Activated CD4-positive, alpha-beta memory T cell treated with anti-CD3 and anti-CD28 coated beads for 36 hours (primary cell): ENCODE measurements at regions of chr1 and their contacts with region 1.

Region 1: DNA sequence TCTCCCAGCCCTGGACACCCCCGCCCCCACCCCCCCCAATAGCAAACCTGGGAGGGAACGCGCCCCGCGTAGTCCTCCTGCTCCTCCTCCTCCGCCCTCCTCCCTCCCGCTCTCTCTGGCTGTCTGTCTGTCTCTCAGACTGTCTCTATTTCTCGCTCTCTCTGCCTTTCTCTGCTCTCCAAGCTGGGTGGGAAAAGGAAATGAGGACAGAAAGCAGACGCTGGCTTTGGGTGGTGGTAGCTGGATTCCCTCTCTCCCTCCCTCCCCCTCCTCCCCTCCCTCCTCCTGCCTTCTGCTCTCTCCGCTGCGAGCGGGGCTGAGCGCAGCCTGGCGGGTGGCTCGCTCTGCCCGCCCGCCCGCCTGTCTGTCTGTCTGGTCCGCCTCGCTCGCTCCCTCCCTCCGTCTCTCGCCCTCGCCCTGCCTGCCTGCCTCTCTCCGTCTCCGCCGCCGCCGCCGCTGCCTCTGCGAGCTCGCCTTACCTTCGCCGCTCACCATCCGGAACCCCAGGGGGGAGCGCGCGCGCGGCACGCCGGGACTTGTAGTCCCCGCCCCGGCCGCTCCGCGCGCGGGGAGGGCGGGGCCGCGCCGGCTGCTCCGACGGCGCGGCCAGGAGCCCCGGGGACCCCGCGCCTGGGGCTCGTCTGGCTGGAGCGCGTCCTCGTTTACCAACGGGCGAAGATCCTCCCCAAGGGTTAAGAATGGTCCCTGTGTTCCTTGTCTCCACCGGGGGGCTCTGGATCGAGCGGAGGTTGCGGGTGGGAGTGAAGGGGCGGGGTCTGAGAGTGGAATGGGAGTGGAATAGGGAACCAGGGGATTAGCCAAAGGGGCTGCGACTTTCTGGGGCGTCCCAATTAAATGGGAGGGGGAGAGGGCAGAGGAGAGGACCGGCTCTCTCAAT is at the start of gene AHDC1:
- DNase-seq: peak; percentile 93
- H3K4me3 Mint-ChIP-seq: peak within 1 kb of the TSS; percentile 82
- H3K27ac Mint-ChIP-seq: peak within 1 kb of the TSS; percentile 44
- H3K4me1 Mint-ChIP-seq: peaks cover 39% of the 10 kb centered on the region
- H3K27me3 Mint-ChIP-seq: no peaks in the 10 kb centered on the region
- total RNA-seq, gene AHDC1: 8.3 to 12.1 TPM

Region 2: GRCh38 chr1:27357281-27358037 is 246.5 kb before region 1 on chr1:
- CTCF ChIA-PET with region 1: interaction called, 41 read pairs
- POLR2A ChIA-PET with region 1: no interaction called
- intact Hi-C with region 1: no loop called
- DNase-seq: peak; percentile 89
- H3K4me3 Mint-ChIP-seq: peak overlapping the region; percentile 68
- H3K27ac Mint-ChIP-seq: peak overlapping the region; percentile 81
- H3K4me1 Mint-ChIP-seq: peaks cover 43% of the 10 kb centered on the region
- H3K27me3 Mint-ChIP-seq: no peaks in the 10 kb centered on the region

Region 3: DNA sequence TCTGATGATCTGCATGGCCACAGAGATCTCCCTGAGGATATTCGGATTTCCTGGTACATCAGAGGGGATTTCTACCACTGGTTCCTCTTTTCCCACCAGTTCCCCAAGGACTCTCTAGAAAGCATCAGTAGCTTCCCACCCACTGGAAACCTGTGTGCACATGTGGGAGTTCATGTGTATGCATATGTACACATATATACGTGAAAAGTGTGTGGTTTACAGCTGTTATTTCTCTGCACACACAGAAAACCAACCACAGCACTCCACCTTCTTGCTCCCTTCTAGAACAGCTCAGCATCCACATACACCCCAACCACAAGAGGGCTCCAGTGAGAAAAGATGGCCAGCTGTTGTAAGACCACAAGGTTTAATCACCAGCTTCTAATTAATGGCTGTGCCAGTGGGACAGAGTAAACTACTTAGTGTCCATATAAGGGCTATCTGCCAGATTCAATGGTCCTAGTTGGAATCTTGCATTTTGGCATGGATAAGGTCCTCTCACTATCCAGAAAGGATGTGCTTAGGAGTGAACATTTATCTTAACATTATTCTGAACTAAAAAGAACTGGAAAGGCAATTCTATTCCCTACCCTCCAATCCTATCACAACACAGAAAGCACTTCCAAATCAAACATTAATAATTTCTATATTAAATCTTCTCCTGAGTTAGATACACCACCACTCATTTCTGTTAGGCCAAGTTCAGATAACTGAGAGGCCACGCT is 187.4 kb before region 1 on chr1:
- CTCF ChIA-PET with region 1: interaction called, 57 read pairs
- POLR2A ChIA-PET with region 1: no interaction called
- intact Hi-C with region 1: loop called (anchors 5 kb)
- DNase-seq: peak; percentile 70
- H3K4me3 Mint-ChIP-seq: no peak overlapping the region
- H3K27ac Mint-ChIP-seq: no peak overlapping the region
- H3K4me1 Mint-ChIP-seq: peaks cover 39% of the 10 kb centered on the region
- H3K27me3 Mint-ChIP-seq: no peaks in the 10 kb centered on the region

Region 4: DNA sequence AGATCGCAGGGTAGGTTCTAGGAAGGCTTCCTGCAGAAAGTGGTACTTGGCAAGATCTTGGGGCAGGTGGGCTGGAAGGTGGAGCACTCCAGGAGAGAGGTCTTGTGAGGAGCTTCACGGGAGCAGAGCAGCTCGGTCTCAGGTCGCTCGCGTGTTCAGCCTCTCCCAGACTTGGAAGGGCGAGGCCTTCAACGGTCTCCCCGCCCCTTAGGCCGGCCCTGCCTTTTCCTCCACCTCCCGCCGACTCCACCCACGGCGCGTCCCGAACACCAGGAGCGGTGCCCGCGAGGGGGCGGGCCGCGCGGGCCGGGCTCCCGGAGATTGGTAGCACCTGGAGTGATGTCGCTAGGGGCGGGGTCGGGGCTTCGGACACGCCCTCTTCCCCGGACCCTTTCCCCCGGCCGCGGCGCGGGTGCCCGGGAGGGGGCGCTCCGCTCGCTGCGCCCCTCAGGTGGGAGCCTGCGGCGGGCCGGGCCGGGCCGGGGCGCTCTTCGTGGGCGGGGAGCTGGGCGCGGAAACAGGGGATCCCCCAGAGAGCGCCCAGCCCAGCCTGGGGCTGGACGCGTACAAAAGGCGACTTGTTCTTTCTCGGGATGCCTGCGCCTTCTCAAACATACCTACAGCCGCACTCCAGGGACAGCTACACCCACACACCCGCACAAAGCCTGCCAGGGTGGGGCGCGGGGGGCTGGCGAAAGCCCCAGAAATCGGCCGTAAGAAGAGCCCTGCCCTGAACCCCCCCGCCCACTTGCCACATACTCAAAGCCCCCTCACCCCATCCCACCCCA is 35.4 kb before region 1 on chr1:
- CTCF ChIA-PET with region 1: interaction called, 56 read pairs
- POLR2A ChIA-PET with region 1: interaction called, 7 read pairs
- intact Hi-C with region 1: loop called (anchors 2 kb)
- DNase-seq: peak; percentile 96
- H3K4me3 Mint-ChIP-seq: peak overlapping the region; percentile 40
- H3K27ac Mint-ChIP-seq: no peak overlapping the region
- H3K4me1 Mint-ChIP-seq: peaks cover 12% of the 10 kb centered on the region
- H3K27me3 Mint-ChIP-seq: no peaks in the 10 kb centered on the region

Region 5: GRCh38 chr1:27662707-27663393 is 58.9 kb after region 1 on chr1:
- CTCF ChIA-PET with region 1: interaction called, 312 read pairs
- POLR2A ChIA-PET with region 1: interaction called, 5 read pairs
- intact Hi-C with region 1: loop called (anchors 1 kb)
- DNase-seq: peak; percentile 94
- H3K4me3 Mint-ChIP-seq: peak overlapping the region; percentile 67
- H3K27ac Mint-ChIP-seq: peak overlapping the region; percentile 99
- H3K4me1 Mint-ChIP-seq: peaks cover 44% of the 10 kb centered on the region
- H3K27me3 Mint-ChIP-seq: no peaks in the 10 kb centered on the region

Region 6: GRCh38 chr1:28301471-28302174 is 697.7 kb after region 1 on chr1:
- CTCF ChIA-PET with region 1: no interaction called
- POLR2A ChIA-PET with region 1: no interaction called
- intact Hi-C with region 1: no loop called
- DNase-seq: no peak
- H3K4me3 Mint-ChIP-seq: no peak overlapping the region
- H3K27ac Mint-ChIP-seq: no peak overlapping the region
- H3K4me1 Mint-ChIP-seq: peaks cover 3% of the 10 kb centered on the region
- H3K27me3 Mint-ChIP-seq: no peaks in the 10 kb centered on the region